Activated CD4-positive, alpha-beta memory T cell treated with anti-CD3 and anti-CD28 coated beads for 36 hours (primary cell): ENCODE measurements at regions of chr11 and their contacts with region 1.

Region 1: DNA sequence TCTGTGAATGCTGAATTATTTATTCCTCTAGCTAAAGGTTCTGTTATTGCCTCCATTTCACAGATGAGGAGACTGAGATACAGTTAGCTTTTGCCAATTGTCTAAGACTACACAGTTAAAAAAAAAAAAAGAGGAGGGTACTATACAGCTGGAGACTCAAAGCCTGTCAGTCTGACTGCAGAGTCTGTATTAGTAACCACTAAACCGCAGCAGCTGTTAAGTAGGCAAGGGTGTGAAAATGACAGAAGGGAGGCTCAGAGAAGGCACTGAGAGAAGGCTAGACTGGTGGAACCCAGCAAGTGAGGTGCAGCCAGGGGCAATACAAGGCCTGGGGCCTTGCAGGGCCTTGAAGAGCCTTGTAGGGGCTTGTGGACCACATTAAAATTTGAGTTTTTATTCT is 181.2 kb downstream of the CSNK2A3 start:
- DNase-seq: peak; percentile 51
- H3K4me3 Mint-ChIP-seq: no peak overlapping the region
- H3K27ac Mint-ChIP-seq: peak overlapping the region; percentile 10
- H3K4me1 Mint-ChIP-seq: peaks cover 27% of the 10 kb centered on the region
- H3K27me3 Mint-ChIP-seq: no peaks in the 10 kb centered on the region

Region 2: DNA sequence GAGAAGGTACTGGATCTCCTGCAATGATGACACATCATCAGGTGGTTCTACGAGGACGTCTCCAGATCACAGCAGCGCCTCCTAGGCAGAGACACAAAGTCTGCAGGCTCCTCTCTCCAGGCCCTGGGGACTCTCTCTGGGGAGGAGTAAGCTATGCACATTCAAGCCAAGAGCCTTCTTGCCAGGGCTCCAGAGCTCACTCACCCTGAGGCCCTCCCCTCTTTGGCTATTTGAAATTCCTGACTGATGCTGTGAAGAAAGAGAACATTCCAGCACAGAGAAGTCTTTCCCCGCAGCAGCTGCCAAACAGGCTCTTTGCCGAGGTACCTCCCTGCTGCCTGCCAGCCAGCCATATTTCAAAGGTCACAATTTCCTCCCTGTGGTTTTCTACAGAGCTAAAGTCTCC is 23.7 kb before region 1 on chr11:
- CTCF ChIA-PET with region 1: no interaction called
- POLR2A ChIA-PET with region 1: no interaction called
- intact Hi-C with region 1: loop called (anchors 2 kb)
- DNase-seq: peak; percentile 58
- H3K4me3 Mint-ChIP-seq: no peak overlapping the region
- H3K27ac Mint-ChIP-seq: no peak overlapping the region
- H3K4me1 Mint-ChIP-seq: peaks cover 37% of the 10 kb centered on the region
- H3K27me3 Mint-ChIP-seq: no peaks in the 10 kb centered on the region

Region 3: DNA sequence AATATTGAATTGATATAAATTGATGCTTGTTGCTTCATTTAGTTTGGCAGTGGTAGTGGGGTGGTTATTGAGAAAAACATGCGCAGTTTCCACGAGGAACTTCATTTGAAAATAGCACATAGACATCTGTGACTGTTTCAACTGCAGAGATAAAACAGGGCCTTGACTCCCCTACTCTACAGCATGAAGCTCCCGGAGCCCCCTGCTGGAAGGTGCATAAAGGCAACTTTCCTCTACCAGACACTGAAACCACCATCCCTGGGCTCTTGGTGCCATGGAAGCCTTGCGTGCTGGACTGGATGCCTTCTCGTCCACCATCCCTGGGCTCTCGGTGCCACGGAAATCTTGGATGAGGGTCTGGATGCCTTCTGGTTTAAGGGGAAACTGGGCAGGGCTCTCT is 14.7 kb before region 1 on chr11:
- CTCF ChIA-PET with region 1: interaction called, 12 read pairs
- POLR2A ChIA-PET with region 1: no interaction called
- intact Hi-C with region 1: loop called (anchors 2 kb)
- DNase-seq: peak; percentile 59
- H3K4me3 Mint-ChIP-seq: no peak overlapping the region
- H3K27ac Mint-ChIP-seq: no peak overlapping the region
- H3K4me1 Mint-ChIP-seq: peaks cover 14% of the 10 kb centered on the region
- H3K27me3 Mint-ChIP-seq: peaks cover 2% of the 10 kb centered on the region

Region 4: DNA sequence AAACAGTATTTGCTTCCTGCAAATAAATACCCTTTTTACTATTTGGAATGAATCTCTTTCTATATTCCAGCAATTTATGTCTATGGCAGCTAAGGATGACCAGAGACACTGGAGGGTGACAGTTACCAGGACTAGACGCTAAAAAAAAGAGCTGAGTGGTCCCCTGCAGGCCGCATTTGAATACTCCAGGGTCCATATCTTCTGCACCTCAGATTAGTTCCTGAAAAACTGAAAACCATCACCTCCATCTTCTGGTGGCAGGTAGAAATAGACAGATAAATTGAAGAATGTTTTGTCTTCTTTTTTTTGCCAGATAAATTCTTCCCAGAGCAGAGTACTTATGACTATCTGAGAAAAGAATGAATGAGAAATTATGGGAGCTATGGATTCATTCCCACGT is 35.6 kb after region 1 on chr11:
- CTCF ChIA-PET with region 1: no interaction called
- POLR2A ChIA-PET with region 1: no interaction called
- intact Hi-C with region 1: no loop called
- DNase-seq: no peak
- H3K4me3 Mint-ChIP-seq: no peak overlapping the region
- H3K27ac Mint-ChIP-seq: no peak overlapping the region
- H3K4me1 Mint-ChIP-seq: no peaks in the 10 kb centered on the region
- H3K27me3 Mint-ChIP-seq: peaks cover 18% of the 10 kb centered on the region

Region 5: DNA sequence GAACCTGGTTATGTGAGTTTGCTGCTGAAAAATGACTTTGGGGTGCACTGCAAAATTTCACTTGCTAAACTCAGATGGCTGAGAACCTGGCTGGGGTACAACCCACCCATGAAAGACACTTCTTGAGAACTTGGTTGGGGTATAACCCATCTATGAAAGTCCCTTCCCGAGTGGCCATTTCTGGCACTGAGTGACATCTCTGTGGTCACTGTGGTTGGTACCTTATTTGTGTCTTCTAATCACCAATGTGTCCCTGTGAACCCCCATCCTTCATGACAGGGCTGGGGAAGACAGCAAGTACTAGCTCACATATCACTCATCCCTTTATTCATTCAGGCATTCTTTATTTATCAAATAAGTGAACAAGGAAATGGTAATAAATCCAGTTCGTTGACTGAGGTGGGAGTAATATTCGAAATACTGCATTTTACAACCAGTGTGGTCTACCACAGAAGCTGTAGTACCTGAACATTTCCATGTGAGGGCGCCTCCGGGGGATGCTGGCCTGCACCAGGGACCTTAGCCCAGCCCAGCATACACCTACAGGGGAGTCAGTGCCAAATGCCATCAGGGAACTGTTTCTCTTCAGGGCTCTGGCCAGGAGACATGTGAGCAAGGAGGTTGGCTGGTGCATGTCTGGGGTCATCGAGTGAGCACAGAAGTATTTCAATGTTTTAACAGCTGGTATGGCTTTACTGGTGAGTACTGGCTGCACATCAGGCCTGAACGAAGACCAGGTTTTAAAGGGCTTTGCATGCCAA is 59.1 kb after region 1 on chr11:
- CTCF ChIA-PET with region 1: no interaction called
- POLR2A ChIA-PET with region 1: no interaction called
- intact Hi-C with region 1: no loop called
- DNase-seq: peak; percentile 36
- H3K4me3 Mint-ChIP-seq: no peak overlapping the region
- H3K27ac Mint-ChIP-seq: no peak overlapping the region
- H3K4me1 Mint-ChIP-seq: no peaks in the 10 kb centered on the region
- H3K27me3 Mint-ChIP-seq: peaks cover 3% of the 10 kb centered on the region

Region 6: DNA sequence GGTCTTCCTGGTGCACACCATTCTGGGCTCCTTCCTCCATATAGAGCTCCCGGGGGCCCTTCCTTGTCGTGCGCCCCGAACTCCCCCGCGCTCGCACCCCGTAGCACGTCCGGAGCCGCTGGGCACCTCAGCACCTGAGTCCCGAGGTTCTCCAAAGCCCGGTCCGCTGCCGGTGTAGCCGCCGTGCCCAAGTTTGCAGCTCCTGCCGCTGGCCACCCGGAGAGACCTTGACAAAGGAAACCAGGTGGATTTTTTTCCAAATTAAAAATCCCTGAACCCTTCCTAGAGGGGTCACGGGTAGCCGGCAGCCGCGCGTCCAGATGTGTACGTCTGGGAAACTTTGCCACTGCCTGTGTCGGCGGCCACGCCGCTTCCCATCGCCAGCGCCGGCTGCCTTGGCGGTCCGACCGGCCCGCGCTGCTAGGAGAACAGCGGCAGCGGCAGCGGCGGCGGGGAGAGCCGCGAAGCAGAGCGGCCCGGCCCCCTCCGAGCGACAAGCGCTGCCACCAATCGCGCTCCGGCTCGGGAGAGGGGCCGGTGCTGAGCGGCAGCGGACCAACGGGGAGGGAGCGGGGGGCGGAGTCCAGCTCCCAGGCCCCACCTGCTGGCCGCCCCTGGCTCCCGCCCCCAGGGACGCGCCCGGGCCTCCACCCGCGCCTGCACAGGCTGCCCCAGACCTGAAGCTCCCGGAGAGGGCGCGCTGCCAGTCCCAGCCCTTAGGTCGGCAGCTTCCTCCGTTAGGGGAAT is 449.9 kb after region 1 on chr11 and contains the start of gene GALNT18:
- CTCF ChIA-PET with region 1: no interaction called
- POLR2A ChIA-PET with region 1: no interaction called
- intact Hi-C with region 1: loop called (anchors 10 kb)
- DNase-seq: peak; percentile 88
- H3K4me3 Mint-ChIP-seq: peak within 1 kb of the TSS; percentile 67
- H3K27ac Mint-ChIP-seq: no peak within 1 kb of the TSS
- H3K4me1 Mint-ChIP-seq: peaks cover 3% of the 10 kb centered on the region
- H3K27me3 Mint-ChIP-seq: peaks cover 54% of the 10 kb centered on the region
- total RNA-seq, gene GALNT18: 2.4 to 2.7 TPM

Region 7: DNA sequence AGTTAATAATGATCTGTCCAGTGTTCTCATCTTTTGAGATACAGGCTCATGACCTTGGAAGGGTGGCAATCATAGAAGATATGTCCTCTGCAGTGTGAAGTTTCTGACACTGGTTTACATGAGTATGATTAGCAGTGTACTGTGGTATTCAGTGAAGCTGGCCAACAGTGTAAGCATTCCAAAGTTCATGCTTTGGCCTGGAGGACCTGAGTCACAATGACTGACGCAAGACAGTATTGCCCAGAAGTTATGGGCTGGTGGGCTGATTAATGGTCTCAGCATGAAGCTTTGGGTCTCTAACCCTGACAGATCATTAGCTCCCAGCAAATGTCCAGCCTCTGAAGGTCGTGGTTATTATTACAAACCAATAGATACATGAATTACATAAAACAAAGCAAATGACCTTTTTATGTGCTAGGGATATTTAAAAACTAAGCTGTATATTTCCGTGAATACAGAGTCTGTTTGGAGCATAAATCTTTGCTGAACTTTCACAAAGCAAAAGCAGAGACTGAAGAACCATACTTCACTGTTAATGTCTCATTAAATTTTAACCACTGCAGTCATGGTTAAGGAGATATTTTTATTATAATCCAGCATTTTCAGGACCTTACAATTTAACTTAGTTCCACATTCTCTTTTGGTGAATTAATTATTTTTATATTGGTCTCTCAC is 641.6 kb after region 1 on chr11:
- CTCF ChIA-PET with region 1: no interaction called
- POLR2A ChIA-PET with region 1: no interaction called
- intact Hi-C with region 1: no loop called
- DNase-seq: no peak
- H3K4me3 Mint-ChIP-seq: no peak overlapping the region
- H3K27ac Mint-ChIP-seq: no peak overlapping the region
- H3K4me1 Mint-ChIP-seq: no peaks in the 10 kb centered on the region
- H3K27me3 Mint-ChIP-seq: peaks cover 6% of the 10 kb centered on the region